Mammary epithelial cell (primary cell): ENCODE measurements at regions of chr5 and their contacts with region 1.

Region 1: GRCh38 chr5:145110834-145111233 is 724.3 kb downstream of the PRELID2 start:
- DNase-seq: no peak
- H3K4me3 ChIP-seq: no peak overlapping the region
- H3K27ac ChIP-seq: no peak overlapping the region
- H3K4me1 ChIP-seq: no peaks in the 10 kb centered on the region
- H3K27me3 ChIP-seq: no peaks in the 10 kb centered on the region
- CTCF ChIP-seq: no peak

Region 2: DNA sequence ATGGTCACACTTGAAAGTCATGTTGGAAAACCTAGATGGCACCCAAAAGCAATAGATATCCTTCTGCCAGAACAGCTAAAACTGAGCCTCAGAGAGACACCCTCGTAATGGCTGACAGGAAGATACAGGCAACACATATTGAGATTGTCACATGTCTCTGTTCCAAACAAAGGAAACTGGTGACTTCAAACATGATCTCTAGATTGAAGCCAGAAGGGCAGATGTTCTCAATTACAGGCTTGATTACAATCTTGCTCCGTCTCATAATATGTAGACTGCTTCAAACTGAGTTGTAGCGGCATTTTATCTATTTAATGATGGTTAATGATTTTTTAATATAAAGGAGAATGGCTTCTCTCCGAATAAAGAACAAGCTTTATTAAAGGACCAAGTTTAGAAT is 165.9 kb before region 1 on chr5:
- CTCF ChIA-PET with region 1: no interaction called
- dilution Hi-C with region 1: no loop called
- in situ Hi-C with region 1: no loop called
- intact Hi-C with region 1: no loop called
- DNase-seq: no peak
- H3K4me3 ChIP-seq: no peak overlapping the region
- H3K27ac ChIP-seq: no peak overlapping the region
- H3K4me1 ChIP-seq: no peaks in the 10 kb centered on the region
- H3K27me3 ChIP-seq: no peaks in the 10 kb centered on the region
- CTCF ChIP-seq: no peak

Region 3: GRCh38 chr5:145025775-145026174 is 85.1 kb before region 1 on chr5:
- CTCF ChIA-PET with region 1: no interaction called
- dilution Hi-C with region 1: no loop called
- in situ Hi-C with region 1: no loop called
- intact Hi-C with region 1: no loop called
- DNase-seq: no peak
- H3K4me3 ChIP-seq: no peak overlapping the region
- H3K27ac ChIP-seq: no peak overlapping the region
- H3K4me1 ChIP-seq: no peaks in the 10 kb centered on the region
- H3K27me3 ChIP-seq: no peaks in the 10 kb centered on the region
- CTCF ChIP-seq: no peak

Region 4: GRCh38 chr5:145141534-145141933 is 30.7 kb after region 1 on chr5:
- CTCF ChIA-PET with region 1: no interaction called
- dilution Hi-C with region 1: loop called (anchors 5 kb)
- in situ Hi-C with region 1: no loop called
- intact Hi-C with region 1: no loop called
- DNase-seq: no peak
- H3K4me3 ChIP-seq: no peak overlapping the region
- H3K27ac ChIP-seq: no peak overlapping the region
- H3K4me1 ChIP-seq: no peaks in the 10 kb centered on the region
- H3K27me3 ChIP-seq: no peaks in the 10 kb centered on the region
- CTCF ChIP-seq: no peak

Region 5: DNA sequence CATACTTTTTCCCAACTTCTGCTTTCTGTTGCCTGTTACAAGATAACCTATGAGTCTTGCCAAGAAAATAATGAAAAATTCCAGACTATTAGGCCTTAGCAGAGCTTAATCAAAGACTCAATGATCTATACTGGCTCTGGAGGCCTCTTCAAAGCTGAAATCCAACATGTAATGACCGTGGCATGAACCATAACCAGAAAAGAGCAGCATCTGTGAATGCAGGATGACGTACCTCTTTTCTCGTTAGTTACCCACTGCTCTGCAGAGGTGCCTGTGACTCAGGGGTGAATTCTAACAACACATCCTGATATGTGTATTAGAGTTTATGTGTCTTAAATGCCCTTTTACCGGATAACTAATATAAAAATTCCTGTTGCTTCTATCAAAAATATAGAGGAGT is 78.9 kb after region 1 on chr5:
- CTCF ChIA-PET with region 1: no interaction called
- dilution Hi-C with region 1: no loop called
- in situ Hi-C with region 1: no loop called
- intact Hi-C with region 1: no loop called
- DNase-seq: no peak
- H3K4me3 ChIP-seq: no peak overlapping the region
- H3K27ac ChIP-seq: no peak overlapping the region
- H3K4me1 ChIP-seq: no peaks in the 10 kb centered on the region
- H3K27me3 ChIP-seq: no peaks in the 10 kb centered on the region
- CTCF ChIP-seq: no peak